Heart right ventricle (tissue), 16 donors: ENCODE measurements at regions of chr21 and their contacts with region 1.

Region 1: DNA sequence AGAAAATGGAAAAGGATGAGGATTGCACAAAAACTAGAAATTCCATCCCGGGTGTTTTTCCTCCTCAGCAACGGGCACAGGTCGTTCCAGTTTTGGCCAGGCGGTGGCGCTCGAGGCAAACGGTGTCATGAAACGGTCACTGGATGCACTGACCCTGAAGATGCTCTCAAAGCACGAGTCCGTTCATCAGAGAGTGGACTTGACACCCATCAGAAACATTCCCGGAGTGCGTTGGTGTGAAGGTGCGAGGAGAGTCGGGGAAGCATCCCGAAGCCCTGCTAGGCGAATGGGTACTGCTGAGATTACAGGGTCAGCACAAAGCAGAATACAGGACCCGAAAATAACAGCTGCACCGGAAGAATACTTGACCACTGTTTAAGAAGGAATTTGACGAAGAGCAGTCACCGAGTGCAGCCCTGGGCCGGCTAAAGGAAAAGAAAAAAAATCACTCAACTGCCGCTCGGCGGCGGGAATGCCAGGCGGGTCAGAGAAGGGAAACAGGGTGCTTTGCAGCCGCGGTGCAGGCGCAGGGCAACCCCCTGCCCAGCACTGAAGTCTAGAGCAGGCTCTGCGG is 71.7 kb upstream of the ETS2 start:
- DNase-seq: peak; percentile 90 to 93
- ATAC-seq: peak; percentile 88 to 96 (median 94)
- H3K4me3 ChIP-seq: peak overlapping the region in 8 of 10 donors; percentile 18 to 44 (median 40)
- H3K27ac ChIP-seq: peak overlapping the region in 9 of 10 donors; percentile 47 to 90 (median 75)
- H3K4me1 ChIP-seq: peaks cover 2 to 25% (median 10%) of the 10 kb centered on the region in 9 donors
- H3K27me3 ChIP-seq: peaks cover 0 to 6% (median 0%) of the 10 kb centered on the region in 7 donors
- CTCF ChIP-seq: peak; percentile 87 to 95 (median 94)

Region 2: GRCh38 chr21:38505654-38506515 is 228.2 kb before region 1 on chr21:
- intact Hi-C with region 1: loop called in 3 of 10 experiments (anchors 5 to 10 kb)
- DNase-seq: peak in 1 of 2 donors; percentile 64
- ATAC-seq: peak; percentile 77 to 94 (median 88)
- H3K4me3 ChIP-seq: peak overlapping the region in 2 of 10 donors; percentile 14 to 26
- H3K27ac ChIP-seq: peak overlapping the region in 3 of 10 donors; percentile 3 to 13 (median 13)
- H3K4me1 ChIP-seq: peaks cover 0 to 49% (median 13%) of the 10 kb centered on the region in 9 donors
- H3K27me3 ChIP-seq: no peaks in the 10 kb centered on the region
- CTCF ChIP-seq: peak; percentile 50 to 90 (median 74)

Region 3: DNA sequence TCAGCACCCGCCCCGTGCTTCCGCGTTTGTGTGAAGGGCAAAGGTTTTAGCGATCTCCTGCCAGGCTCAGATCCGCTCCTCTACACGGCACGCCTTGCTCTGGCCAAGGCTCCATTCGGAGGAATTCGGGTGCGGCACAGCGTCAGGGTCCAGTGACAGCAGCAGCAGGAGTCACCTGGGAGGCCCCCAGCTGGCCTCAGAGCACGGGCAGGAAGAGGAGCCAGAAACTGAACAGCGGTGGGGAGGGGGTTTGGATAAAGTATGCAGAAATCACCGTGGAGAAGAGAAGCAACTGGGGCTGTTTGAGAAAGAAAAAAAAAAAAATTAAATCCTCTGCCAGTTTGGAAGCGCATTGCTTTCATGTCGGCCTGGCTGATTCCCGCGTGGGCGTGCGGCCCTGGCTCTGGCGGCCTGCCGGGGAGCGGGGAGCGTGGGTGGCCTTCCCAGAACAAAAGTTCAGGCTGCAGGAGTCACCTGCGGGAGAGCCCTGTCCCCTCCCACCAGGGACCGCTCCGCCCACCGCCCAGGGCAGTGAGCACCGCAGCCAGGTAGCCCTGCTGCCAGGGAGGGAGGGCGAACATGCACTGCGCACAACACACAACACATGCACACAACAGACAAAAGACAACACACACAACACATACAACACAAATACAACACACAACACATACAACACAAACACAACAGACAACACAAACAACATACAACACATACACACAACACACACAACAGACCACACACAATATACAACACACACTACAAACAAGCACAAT is 179.2 kb after region 1 on chr21:
- intact Hi-C with region 1: loop called in 2 of 10 experiments (anchors 5 to 10 kb)
- DNase-seq: peak; percentile 61 to 72
- ATAC-seq: peak; percentile 49 to 83 (median 77)
- H3K4me3 ChIP-seq: peak overlapping the region in 7 of 10 donors; percentile 5 to 36 (median 19)
- H3K27ac ChIP-seq: peak overlapping the region; percentile 4 to 92 (median 78)
- H3K4me1 ChIP-seq: peaks cover 12 to 70% (median 44%) of the 10 kb centered on the region in 9 donors
- H3K27me3 ChIP-seq: no peaks in the 10 kb centered on the region
- CTCF ChIP-seq: no peak

Region 4: GRCh38 chr21:39004634-39005501 is 270.8 kb after region 1 on chr21:
- intact Hi-C with region 1: loop called in 1 of 10 experiments (anchors 10 kb)
- DNase-seq: peak; percentile 65 to 78
- ATAC-seq: peak; percentile 38 to 74 (median 65)
- H3K4me3 ChIP-seq: no peak overlapping the region
- H3K27ac ChIP-seq: peak overlapping the region; percentile 74 to 92 (median 84)
- H3K4me1 ChIP-seq: peaks cover 13 to 91% (median 76%) of the 10 kb centered on the region in 9 donors
- H3K27me3 ChIP-seq: no peaks in the 10 kb centered on the region
- CTCF ChIP-seq: no peak

Region 5: DNA sequence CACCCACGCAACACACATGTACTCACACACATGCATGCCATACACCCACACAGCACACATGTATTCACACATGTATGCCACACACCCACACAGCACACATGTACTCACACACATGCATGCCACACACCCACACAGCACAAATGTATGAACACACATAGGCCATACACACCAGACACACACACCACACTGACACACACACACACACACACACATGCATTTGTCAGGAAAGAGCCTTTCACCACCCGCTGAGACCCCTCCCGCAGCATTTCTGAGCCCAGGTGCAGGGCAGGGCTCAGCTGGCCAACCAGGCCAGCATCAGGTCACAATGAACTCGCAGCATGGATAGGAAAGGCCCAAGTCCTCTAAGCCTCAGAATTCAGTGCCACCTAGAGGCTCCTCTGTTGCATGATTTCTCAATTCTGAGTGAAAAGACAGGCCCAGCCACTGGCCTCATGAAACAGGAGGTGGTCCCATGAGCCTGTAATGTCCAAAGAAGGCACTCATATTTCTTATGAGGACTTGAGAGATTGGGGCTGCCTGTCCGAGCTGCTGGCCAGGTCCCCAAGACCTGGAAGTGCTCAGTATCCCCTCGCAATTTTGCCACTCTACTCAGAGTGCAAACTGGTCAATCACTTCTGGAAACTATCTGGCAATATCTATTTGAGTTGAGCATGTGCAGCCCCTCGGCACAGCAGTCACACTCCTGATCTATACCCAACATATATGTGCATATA is 391.9 kb after region 1 on chr21:
- intact Hi-C with region 1: loop called in 4 of 10 experiments (anchors 1 to 2 kb)
- DNase-seq: peak in 1 of 2 donors; percentile 67
- ATAC-seq: peak; percentile 89 to 96 (median 94)
- H3K4me3 ChIP-seq: no peak overlapping the region
- H3K27ac ChIP-seq: peak overlapping the region in 4 of 10 donors; percentile 4 to 68 (median 52)
- H3K4me1 ChIP-seq: peaks cover 0 to 25% (median 13%) of the 10 kb centered on the region in 9 donors
- H3K27me3 ChIP-seq: no peaks in the 10 kb centered on the region
- CTCF ChIP-seq: peak; percentile 43 to 81 (median 69)